ENCODE measurements at regions of chr19 and their contacts with region 1.

Region 1: GRCh38 chr19:7799640-7800355 is 30.2 kb upstream of the EVI5L start:
- DNase-seq: peak; percentile 13 to 61 (median 39)
- ATAC-seq: peak; percentile 71
- H3K4me3 ChIP-seq: no peak overlapping the region
- H3K4me3 Mint-ChIP-seq: peak overlapping the region in 1 of 10 donors; percentile 23
- H3K27ac ChIP-seq: no peak overlapping the region
- H3K27ac Mint-ChIP-seq: peak overlapping the region in 1 of 9 donors; percentile 63
- H3K4me1 ChIP-seq: no peaks in the 10 kb centered on the region
- H3K4me1 Mint-ChIP-seq: peaks cover 0 to 8% (median 6%) of the 10 kb centered on the region in 7 donors
- H3K27me3 ChIP-seq: no peaks in the 10 kb centered on the region
- H3K27me3 Mint-ChIP-seq: peaks cover 0 to 44% (median 11%) of the 10 kb centered on the region in 5 donors

Region 2: DNA sequence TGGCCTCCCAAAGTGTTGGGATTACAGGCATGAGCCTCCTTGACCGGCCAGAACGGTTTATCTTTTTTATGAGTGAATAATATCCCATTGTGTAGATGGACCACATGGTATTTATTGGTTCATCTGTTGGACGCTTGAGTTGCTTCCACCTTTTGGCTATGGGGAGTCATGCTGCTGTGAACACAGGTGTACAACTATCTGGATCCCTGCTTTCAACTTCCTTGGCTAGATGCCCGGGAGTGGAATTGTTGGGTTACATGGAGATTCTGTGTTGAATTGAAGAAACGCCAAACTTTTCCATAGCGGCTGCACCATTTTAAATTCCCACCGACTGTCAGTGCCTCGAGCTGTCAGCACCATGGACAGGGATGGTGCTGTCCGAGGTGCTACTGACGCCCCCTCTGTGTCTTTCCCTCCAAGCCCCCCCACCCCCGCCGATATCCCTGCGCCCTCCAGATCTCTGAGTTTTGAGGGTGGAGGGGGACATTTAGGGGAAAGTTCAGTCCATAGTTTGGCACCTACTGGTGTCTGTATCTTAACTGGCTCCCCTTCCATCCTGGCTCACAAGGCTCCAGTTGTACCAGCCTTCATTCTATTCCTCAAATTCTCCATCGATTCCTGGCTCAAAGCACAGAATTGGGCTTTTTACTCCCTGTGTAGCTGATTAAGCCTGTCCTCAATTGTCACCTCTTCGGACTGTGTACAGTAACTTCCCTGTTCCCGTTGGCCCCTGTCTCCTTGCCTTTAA is 237.0 kb before region 1 on chr19:
- CTCF ChIA-PET with region 1: interaction called, 48 read pairs
- POLR2A ChIA-PET with region 1: interaction called, 4 read pairs
- intact Hi-C with region 1: loop called (anchors 1 kb)
- DNase-seq: peak in 1 of 9 donors; percentile 5
- ATAC-seq: no peak
- H3K4me3 ChIP-seq: no peak overlapping the region
- H3K4me3 Mint-ChIP-seq: no peak overlapping the region
- H3K27ac ChIP-seq: no peak overlapping the region
- H3K27ac Mint-ChIP-seq: no peak overlapping the region
- H3K4me1 ChIP-seq: no peaks in the 10 kb centered on the region
- H3K4me1 Mint-ChIP-seq: peaks cover 0 to 2% (median 0%) of the 10 kb centered on the region in 7 donors
- H3K27me3 ChIP-seq: no peaks in the 10 kb centered on the region
- H3K27me3 Mint-ChIP-seq: no peaks in the 10 kb centered on the region

Region 3: GRCh38 chr19:7652061-7652641 is 147.6 kb before region 1 on chr19:
- CTCF ChIA-PET with region 1: interaction called, 11 read pairs
- POLR2A ChIA-PET with region 1: interaction called, 3 read pairs
- intact Hi-C with region 1: loop called (anchors 1 kb)
- DNase-seq: peak; percentile 77 to 91 (median 85)
- ATAC-seq: peak; percentile 91
- H3K4me3 ChIP-seq: peak overlapping the region; percentile 49
- H3K4me3 Mint-ChIP-seq: peak overlapping the region; percentile 60 to 86 (median 81)
- H3K27ac ChIP-seq: peak overlapping the region; percentile 37
- H3K27ac Mint-ChIP-seq: peak overlapping the region in 6 of 9 donors; percentile 55 to 85 (median 75)
- H3K4me1 ChIP-seq: peaks cover 0 to 7% of the 10 kb centered on the region in 2 donors
- H3K4me1 Mint-ChIP-seq: peaks cover 5 to 15% (median 11%) of the 10 kb centered on the region in 7 donors
- H3K27me3 ChIP-seq: no peaks in the 10 kb centered on the region
- H3K27me3 Mint-ChIP-seq: peaks cover 0 to 6% (median 0%) of the 10 kb centered on the region in 5 donors

Region 4: DNA sequence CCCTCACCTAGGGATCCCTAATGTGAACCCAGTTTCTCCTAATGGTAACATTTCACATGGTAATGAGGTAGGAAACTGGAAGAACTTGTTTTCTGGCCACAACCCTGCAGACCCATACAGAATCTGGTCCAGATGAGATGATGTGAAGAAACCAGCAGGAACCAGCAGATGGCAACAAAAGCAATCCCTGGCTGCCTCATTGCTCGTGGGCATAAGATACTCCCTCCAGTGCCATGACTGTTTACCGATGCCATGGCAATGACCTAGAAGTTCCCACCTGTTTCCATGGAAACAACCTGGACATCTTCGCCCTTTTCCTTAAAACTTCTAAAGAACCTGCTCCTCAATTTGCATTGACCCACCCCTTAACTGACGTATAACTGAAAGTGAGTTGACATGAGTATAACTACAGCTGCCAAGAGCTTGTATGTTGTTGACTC is 51.0 kb before region 1 on chr19:
- CTCF ChIA-PET with region 1: interaction called, 4 read pairs
- POLR2A ChIA-PET with region 1: no interaction called
- intact Hi-C with region 1: loop called in 1 of 2 experiments (anchors 10 kb)
- DNase-seq: no peak
- ATAC-seq: no peak
- H3K4me3 ChIP-seq: no peak overlapping the region
- H3K4me3 Mint-ChIP-seq: no peak overlapping the region
- H3K27ac ChIP-seq: no peak overlapping the region
- H3K27ac Mint-ChIP-seq: no peak overlapping the region
- H3K4me1 ChIP-seq: no peaks in the 10 kb centered on the region
- H3K4me1 Mint-ChIP-seq: peaks cover 5 to 15% (median 8%) of the 10 kb centered on the region in 7 donors
- H3K27me3 ChIP-seq: no peaks in the 10 kb centered on the region
- H3K27me3 Mint-ChIP-seq: peaks cover 0 to 17% (median 5%) of the 10 kb centered on the region in 5 donors

Measured in naive thymus-derived CD4-positive, alpha-beta T cell (primary cell).